ENCODE measurements at regions of chr17 and their contacts with region 1.

Region 1: DNA sequence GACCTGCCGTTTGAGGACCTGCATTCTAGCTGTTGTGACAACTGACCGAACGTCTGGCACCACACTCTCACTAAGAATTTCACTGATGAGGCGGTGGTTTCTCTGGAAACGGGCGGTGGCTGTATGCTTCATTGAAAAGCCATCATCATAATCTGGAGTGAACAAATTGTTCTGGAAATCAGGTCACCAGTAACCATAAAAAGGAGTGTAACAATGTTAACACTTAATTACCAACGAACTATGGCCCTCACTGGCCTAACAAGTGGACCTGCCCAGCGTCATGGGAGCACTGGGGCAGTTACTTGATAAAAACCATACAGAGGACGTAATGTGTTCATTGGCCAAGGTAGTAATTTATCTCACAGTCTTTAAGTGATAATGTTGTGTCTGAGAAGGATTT is 15.4 kb downstream of the SMARCE1 start:
- DNase-seq: no peak
- ATAC-seq: no peak
- H3K4me3 ChIP-seq: no peak overlapping the region
- H3K27ac ChIP-seq: no peak overlapping the region
- H3K4me1 ChIP-seq: no peaks in the 10 kb centered on the region
- H3K27me3 ChIP-seq: no peaks in the 10 kb centered on the region
- CTCF ChIP-seq: no peak
- POLR2A ChIP-seq: no peak

Region 2: GRCh38 chr17:40139566-40140058 is 492.6 kb before region 1 on chr17:
- intact Hi-C with region 1: loop called in 1 of 10 experiments (anchors 10 kb)
- DNase-seq: peak in 1 of 5 donors; percentile 20
- ATAC-seq: peak in 3 of 4 donors; percentile 1 to 3 (median 1)
- H3K4me3 ChIP-seq: peak overlapping the region; percentile 45 to 91 (median 79)
- H3K27ac ChIP-seq: peak overlapping the region; percentile 89 to 99 (median 98)
- H3K4me1 ChIP-seq: peaks cover 3 to 27% (median 22%) of the 10 kb centered on the region in 12 donors
- H3K27me3 ChIP-seq: no peaks in the 10 kb centered on the region
- CTCF ChIP-seq: no peak
- POLR2A ChIP-seq: no peak

Region 3: DNA sequence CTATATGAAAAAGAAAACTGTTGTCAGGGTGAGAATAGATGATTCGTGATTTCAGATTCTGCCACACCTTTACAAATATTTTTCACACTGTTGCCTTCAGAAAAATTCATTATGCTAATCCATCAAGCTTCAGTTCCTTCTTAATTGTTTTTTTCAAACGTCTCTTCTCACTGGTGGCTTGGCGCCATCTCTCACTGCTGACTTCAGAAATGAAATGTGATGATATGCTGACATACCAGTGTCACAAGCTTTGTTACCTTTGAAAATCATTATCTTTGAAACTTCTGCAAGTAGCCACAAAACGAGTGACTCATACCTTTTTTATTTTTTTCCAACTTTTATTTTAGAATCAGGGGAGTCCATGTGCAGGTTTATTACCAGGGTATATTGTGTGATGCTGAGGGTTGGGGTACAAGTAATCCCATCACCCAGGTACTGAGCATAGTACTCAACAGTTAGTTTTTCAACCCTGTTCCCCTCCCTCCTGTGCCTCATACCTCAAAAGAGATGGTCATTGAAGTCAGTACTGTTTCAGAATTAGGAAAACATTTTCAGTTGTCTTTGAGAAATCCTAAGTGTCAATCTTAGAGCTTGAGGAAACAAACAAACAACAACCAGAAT is 46.8 kb after region 1 on chr17:
- intact Hi-C with region 1: no loop called
- DNase-seq: no peak
- ATAC-seq: no peak
- H3K4me3 ChIP-seq: no peak overlapping the region
- H3K27ac ChIP-seq: no peak overlapping the region
- H3K4me1 ChIP-seq: no peaks in the 10 kb centered on the region
- H3K27me3 ChIP-seq: peaks cover 0 to 37% (median 0%) of the 10 kb centered on the region in 9 donors
- CTCF ChIP-seq: no peak
- POLR2A ChIP-seq: no peak

Measured in heart left ventricle (tissue), 16 donors.